ENCODE measurements at regions of chr19 and their contacts with region 1.

Region 1: DNA sequence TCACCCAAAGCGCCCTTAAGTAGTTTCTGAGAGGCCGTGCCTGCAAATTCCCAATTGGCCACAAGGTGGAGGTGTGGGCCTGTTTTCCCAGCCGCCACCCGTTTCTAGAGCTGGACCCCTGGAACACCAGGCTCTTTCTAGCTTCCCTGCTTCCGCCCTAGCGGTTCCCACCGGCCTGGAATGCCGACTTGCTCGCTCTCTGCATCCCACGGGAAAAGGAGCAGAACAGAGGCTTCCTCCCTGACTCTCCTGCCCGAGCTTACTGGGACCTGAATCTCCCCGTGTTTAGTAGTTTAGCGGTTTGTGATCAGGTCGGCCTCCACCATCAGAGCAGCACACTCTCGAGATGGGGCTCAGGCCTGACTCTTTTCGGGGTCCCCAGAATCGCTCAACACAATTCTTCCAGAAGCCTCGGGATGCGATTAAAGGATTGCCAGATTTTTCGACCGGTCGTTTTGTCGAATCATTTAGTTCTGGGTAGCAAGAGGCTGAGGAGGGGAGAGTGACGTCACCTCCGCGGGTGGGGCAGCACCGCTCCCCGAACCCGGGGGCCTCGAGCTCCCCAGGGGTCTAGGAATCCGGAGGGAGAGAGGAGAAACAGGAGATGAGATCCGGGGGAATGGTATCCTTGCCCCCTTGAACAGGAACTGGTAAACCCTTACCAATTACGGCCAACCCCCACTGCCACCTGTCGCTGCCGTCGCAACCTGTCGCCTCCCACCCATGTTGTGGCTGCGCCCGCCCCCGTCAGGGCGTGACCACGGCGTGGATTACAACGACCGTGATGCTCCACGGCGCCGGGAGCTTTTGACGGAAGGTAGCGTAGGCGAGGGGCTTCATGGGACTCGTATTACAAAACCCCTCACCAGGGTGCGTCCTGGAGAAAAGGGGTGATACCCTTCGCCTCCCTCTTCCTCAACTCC is 8.0 kb downstream of the NAPSA start:
- DNase-seq: peak; percentile 92
- H3K4me3 Mint-ChIP-seq: peak overlapping the region; percentile 81
- H3K27ac Mint-ChIP-seq: peak overlapping the region; percentile 93
- H3K4me1 Mint-ChIP-seq: peaks cover 53% of the 10 kb centered on the region
- H3K27me3 Mint-ChIP-seq: no peaks in the 10 kb centered on the region

Region 2: DNA sequence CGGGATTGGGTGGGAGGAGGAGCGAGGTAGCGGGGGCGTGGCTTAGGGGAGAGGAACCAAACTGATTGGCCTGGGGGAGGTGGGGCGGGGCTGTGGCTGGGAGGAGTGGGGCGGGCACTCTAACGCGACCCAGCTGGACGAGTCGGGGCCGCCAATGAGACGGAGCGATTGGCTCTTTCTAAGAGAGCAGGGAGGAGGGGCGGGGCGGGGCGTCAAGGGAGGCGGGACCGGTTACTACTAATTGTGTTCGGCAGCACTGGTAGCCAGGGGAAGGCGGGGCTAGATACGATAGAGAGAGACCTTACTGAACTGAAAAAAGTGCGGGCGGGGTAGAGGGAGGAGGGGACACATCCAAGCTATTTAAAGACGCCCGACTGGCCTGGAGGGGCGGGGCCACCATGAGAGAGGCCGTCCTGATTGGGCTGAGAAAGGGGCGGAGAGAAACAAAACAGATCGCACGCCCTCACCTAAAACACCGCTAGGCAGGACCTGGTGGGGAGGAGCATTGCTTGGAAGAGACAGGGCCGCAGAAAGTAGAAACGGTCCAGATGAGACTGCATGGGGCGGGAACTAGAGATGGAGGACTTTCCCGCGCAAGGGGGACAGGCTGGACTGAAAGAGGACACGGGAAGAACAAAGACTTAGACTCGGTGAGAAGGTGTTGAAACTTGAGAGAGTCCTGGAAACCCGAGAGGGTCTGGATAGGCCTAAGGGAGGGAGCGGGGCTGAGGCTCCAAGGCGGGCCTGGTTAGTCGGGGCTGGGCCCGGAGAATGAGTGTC is 28.1 kb before region 1 on chr19 and contains the start of gene KCNC3:
- CTCF ChIA-PET with region 1: interaction called, 11 read pairs
- POLR2A ChIA-PET with region 1: interaction called, 3 read pairs
- intact Hi-C with region 1: loop called (anchors 2 kb)
- DNase-seq: peak; percentile 100
- H3K4me3 Mint-ChIP-seq: peak within 1 kb of the TSS; percentile 82
- H3K27ac Mint-ChIP-seq: peak within 1 kb of the TSS; percentile 88
- H3K4me1 Mint-ChIP-seq: peaks cover 67% of the 10 kb centered on the region
- H3K27me3 Mint-ChIP-seq: peaks cover 49% of the 10 kb centered on the region
- total RNA-seq, gene KCNC3: 5.4 to 6.2 TPM

Region 3: DNA sequence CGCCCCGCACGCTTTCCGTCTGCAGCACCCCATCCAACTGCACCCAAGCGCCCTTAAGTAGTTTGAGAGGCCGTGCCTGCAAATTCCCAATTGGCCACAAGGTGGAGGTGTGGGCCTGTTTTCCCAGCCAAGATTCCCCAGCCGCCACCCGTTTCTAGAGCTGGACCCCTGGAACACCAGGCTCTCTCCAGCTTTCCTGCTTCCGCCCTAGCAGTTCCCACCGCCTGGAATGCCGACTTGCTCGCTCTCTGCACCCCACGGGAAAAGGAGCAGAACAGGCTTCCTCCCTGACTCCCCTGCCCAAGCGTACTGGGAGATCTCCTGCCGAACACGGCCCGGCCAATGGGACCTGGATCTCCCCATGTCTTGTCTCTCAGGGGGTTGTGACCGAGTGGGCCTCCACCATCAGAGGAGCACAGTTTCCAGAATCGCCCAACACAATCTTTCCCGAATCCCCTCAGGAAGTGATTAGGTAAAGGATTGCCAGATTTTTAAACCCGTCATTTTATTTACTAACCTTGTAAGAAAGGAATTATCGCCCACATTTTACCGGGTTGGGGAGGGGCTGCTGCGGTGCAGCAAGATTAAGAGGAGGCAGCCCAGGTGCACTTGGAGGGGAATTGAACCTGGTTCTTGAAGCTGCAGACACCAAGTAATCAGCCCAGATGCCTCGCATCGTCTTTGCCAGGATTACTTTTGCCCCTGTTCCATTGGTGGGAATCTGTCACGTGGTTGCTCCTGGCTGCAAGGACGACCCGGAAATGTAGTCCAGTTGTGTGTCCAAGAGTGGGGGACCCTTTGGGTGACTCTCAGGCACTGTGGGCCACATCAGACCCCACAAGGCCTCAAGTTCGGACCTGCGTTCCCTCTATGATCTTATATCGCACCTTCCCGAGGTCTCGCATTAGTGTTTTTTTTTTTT is 11.5 kb after region 1 on chr19:
- CTCF ChIA-PET with region 1: interaction called, 60 read pairs
- POLR2A ChIA-PET with region 1: interaction called, 12 read pairs
- intact Hi-C with region 1: loop called (anchors 1 kb)
- DNase-seq: peak; percentile 88
- H3K4me3 Mint-ChIP-seq: peak overlapping the region; percentile 94
- H3K27ac Mint-ChIP-seq: peak overlapping the region; percentile 93
- H3K4me1 Mint-ChIP-seq: peaks cover 35% of the 10 kb centered on the region
- H3K27me3 Mint-ChIP-seq: no peaks in the 10 kb centered on the region

Region 4: DNA sequence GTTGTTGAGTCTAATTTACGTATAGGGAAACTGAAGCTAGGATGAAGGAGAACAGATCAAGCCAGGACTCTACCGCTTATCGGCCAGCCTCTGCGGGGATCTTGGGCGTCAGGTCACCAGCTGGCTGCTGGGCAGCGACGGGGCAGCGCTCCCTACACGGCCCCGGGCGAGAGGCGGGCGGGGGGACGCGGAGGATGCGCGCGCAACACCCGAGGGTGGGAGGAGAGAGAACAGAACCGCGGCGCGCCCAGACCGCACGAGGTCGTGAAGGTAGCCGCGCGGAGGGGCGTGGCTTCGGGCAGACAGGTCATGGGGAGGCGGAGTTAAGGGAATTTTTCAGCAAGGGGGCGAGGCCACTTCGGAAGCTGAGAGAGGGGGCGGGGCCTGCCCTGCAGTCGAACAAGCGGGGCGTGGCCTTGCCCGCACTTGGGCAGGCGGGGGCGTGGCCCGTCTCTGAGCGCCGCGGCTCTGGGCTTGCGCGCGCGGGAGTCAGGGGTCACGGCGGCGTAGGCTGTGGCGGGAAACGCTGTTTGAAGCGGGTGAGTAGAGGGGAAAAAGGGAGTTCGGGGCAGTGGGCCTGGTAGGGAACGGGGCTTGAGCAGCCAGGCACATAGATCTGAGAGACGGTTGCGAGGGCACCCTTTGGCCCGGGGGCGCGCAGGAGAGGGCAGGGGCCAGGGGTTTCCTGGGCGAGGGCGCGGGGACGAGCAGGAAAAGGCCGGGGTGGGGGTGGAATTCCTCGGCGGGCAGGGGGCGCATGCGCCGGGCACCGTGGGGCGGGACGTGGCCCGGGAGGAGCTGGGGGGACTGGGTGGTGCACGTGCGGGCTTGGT is 26.6 kb after region 1 on chr19 and contains the start of gene POLD1:
- CTCF ChIA-PET with region 1: interaction called, 10 read pairs
- POLR2A ChIA-PET with region 1: interaction called, 12 read pairs
- intact Hi-C with region 1: no loop called
- DNase-seq: peak; percentile 99
- H3K4me3 Mint-ChIP-seq: peak within 1 kb of the TSS; percentile 98
- H3K27ac Mint-ChIP-seq: peak within 1 kb of the TSS; percentile 95
- H3K4me1 Mint-ChIP-seq: peaks cover 33% of the 10 kb centered on the region
- H3K27me3 Mint-ChIP-seq: no peaks in the 10 kb centered on the region
- total RNA-seq, gene POLD1: 190 to 191 TPM

Region 5: DNA sequence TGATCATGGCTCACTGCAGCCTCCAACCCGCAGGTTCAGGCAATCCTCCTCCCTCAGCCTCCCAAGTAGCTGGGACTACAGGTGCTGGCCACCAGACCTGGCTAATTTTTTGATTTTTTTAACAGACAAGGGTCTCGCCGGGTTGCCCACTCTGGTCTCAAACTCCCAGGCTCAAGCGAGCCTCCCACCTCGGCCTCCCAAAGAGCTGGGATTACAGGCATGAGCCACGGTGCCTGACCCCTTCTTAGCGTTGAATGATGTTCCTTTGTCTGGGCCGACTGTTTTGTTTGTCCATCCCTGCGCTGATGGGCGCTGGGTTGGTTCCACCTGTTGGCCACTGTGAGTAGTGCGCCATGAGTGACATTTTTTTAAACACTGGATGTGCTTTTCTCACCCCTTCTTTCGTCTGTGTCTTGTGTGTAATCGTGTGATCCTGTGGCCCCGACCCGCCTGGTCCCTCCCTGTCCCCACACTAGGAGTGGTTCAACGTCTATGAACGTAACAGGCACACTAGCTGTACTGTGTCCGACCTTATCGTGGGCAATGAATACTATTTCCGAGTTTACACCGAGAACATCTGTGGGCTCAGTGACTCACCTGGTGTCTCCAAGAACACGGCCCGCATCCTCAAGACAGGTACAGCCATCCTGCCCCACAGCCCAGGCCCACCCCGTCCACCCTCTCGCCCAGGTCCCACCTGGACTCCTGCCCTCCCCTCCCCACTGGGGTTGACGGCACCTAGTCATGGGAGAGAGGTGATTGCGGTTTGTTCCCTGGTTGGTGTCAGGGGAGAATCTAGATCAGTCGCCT is 103.8 kb after region 1 on chr19:
- CTCF ChIA-PET with region 1: interaction called, 54 read pairs
- POLR2A ChIA-PET with region 1: interaction called, 10 read pairs
- intact Hi-C with region 1: loop called (anchors 1 kb)
- DNase-seq: peak; percentile 80
- H3K4me3 Mint-ChIP-seq: no peak overlapping the region
- H3K27ac Mint-ChIP-seq: no peak overlapping the region
- H3K4me1 Mint-ChIP-seq: peaks cover 13% of the 10 kb centered on the region
- H3K27me3 Mint-ChIP-seq: peaks cover 36% of the 10 kb centered on the region

Region 6: GRCh38 chr19:50777754-50778303 is 420.4 kb after region 1 on chr19:
- CTCF ChIA-PET with region 1: interaction called, 12 read pairs
- POLR2A ChIA-PET with region 1: no interaction called
- intact Hi-C with region 1: loop called (anchors 5 kb)
- DNase-seq: no peak
- H3K4me3 Mint-ChIP-seq: no peak overlapping the region
- H3K27ac Mint-ChIP-seq: no peak overlapping the region
- H3K4me1 Mint-ChIP-seq: no peaks in the 10 kb centered on the region
- H3K27me3 Mint-ChIP-seq: peaks cover 50% of the 10 kb centered on the region